ENCODE measurements at regions of chr7 and their contacts with region 1.

Region 1: DNA sequence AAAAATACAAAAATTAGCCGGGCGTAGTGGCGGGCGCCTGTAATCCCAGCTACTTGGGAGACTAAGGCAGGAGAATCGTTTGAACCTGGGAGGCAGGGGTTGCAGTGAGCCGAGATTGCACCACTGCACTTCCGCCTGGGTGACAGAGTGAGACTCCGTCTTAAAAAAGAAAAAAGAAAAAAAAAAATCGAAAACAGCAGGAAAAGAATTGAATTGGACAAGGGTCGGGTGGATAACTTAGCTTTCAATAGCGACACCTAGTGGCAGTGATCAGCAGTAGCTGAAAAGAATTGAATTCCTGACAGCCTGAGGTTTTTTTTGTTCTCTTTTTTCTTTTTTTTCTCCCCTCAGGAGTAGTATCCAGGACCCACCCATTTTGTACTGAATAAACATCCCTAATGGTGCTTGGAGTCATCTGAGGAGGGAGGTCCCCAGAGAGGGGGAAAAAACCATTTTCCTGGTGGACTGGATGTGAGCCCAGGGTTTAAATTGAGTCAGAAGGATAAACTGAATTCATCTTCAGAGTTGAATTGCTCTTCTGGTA is 55.1 kb downstream of the CYCS start:
- DNase-seq: no peak
- H3K4me3 ChIP-seq: peak overlapping the region; percentile 30 to 41 (median 33)
- H3K27ac ChIP-seq: no peak overlapping the region
- H3K4me1 ChIP-seq: peaks cover 0 to 10% (median 7%) of the 10 kb centered on the region in 4 donors
- H3K27me3 ChIP-seq: no peaks in the 10 kb centered on the region
- CTCF ChIP-seq: peak; percentile 74 to 90 (median 87)
- EP300 ChIP-seq: no peak
- POLR2A ChIP-seq: no peak

Region 2: DNA sequence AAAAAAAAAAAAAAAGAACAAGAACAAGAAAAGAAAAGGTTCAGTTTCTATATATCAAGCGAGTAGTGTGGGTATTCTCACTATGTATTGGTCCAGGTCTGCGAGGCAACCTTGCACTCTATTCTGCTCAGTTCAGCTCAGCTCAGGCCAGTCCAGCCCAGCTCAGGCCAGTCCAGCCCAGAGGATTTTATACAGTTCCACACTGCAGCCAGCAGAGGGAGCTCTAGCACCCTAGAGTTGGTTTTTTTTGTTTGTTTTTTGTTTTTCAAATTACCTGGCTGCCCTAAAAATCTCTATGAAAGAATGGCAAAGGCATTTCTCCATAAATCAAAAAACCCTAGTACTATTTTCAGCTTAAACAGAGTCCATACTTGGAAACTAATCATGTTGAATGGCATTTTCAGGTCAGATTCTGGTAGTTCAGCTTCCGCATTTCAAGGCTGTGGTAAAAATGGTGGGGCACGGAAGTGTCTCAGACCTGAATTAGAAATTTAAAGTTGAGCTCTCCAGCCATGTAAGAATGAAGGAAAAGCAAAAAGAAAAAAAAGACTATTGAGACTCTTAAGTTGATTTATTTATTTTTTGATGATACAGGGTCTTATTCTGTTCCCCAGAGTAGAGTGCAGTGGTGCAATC is 257.5 kb before region 1 on chr7:
- intact Hi-C with region 1: loop called (anchors 2 kb)
- DNase-seq: no peak
- H3K4me3 ChIP-seq: no peak overlapping the region
- H3K27ac ChIP-seq: no peak overlapping the region
- H3K4me1 ChIP-seq: no peaks in the 10 kb centered on the region
- H3K27me3 ChIP-seq: no peaks in the 10 kb centered on the region
- CTCF ChIP-seq: peak; percentile 84 to 94 (median 90)
- EP300 ChIP-seq: no peak
- POLR2A ChIP-seq: no peak

Region 3: GRCh38 chr7:24819916-24820689 is 249.9 kb before region 1 on chr7:
- intact Hi-C with region 1: loop called (anchors 2 kb)
- DNase-seq: peak; percentile 95
- H3K4me3 ChIP-seq: no peak overlapping the region
- H3K27ac ChIP-seq: peak overlapping the region in 3 of 4 donors; percentile 45 to 62 (median 59)
- H3K4me1 ChIP-seq: peaks cover 8 to 24% (median 23%) of the 10 kb centered on the region in 4 donors
- H3K27me3 ChIP-seq: no peaks in the 10 kb centered on the region
- CTCF ChIP-seq: peak; percentile 81 to 90 (median 84)
- EP300 ChIP-seq: no peak
- POLR2A ChIP-seq: no peak

Region 4: GRCh38 chr7:24869572-24869971 is 200.4 kb before region 1 on chr7:
- intact Hi-C with region 1: no loop called
- DNase-seq: no peak
- H3K4me3 ChIP-seq: no peak overlapping the region
- H3K27ac ChIP-seq: no peak overlapping the region
- H3K4me1 ChIP-seq: no peaks in the 10 kb centered on the region
- H3K27me3 ChIP-seq: no peaks in the 10 kb centered on the region
- CTCF ChIP-seq: no peak
- EP300 ChIP-seq: no peak
- POLR2A ChIP-seq: no peak

Region 5: DNA sequence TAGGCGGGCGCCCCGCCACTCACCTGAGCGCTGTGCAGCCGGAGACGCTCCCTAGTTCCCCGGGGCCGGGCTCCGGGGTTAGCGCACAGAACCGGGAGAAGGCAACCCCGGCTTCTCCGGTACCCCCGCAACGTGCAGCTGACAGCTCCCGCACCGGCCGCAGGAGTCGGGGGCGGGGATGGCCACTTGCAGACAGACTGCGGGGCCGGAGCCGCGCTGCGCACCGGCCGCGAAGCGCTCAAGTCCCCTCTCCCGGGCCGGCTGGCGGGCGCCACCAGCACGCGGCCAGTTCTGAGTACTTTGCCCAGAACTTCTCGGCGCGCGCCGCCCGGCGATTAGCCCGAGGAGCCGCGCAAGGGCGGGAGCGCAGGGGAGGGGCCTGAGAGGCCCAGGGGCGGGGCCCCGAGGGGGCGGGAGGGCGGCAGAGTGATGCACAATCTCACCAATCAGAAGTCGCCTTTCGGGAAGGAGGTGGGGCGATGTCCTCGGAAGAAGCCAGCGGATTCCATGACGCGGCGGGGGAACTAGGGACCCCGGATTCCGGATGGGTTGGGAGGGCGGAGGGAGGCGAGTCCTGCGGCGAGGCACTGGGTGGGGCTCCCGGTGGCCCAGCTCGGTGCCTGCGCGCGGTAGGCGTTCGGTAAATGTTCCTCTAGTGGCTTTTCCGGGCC is 90.0 kb before region 1 on chr7 and contains the start of gene OSBPL3:
- intact Hi-C with region 1: loop called (anchors 5 kb)
- DNase-seq: peak; percentile 98
- H3K4me3 ChIP-seq: peak within 1 kb of the TSS; percentile 75 to 85 (median 78)
- H3K27ac ChIP-seq: peak within 1 kb of the TSS; percentile 89 to 93 (median 92)
- H3K4me1 ChIP-seq: peaks cover 13 to 29% (median 20%) of the 10 kb centered on the region in 4 donors
- H3K27me3 ChIP-seq: no peaks in the 10 kb centered on the region
- CTCF ChIP-seq: peak in 1 of 3 experiments; percentile 13
- EP300 ChIP-seq: no peak
- POLR2A ChIP-seq: peak; percentile 26
- total RNA-seq, gene OSBPL3: 2.6 to 4.6 (median 3.3) TPM

Region 6: GRCh38 chr7:24991353-24991752 is 78.6 kb before region 1 on chr7:
- intact Hi-C with region 1: no loop called
- DNase-seq: no peak
- H3K4me3 ChIP-seq: no peak overlapping the region
- H3K27ac ChIP-seq: no peak overlapping the region
- H3K4me1 ChIP-seq: no peaks in the 10 kb centered on the region
- H3K27me3 ChIP-seq: no peaks in the 10 kb centered on the region
- CTCF ChIP-seq: no peak
- EP300 ChIP-seq: no peak
- POLR2A ChIP-seq: no peak

Region 7: DNA sequence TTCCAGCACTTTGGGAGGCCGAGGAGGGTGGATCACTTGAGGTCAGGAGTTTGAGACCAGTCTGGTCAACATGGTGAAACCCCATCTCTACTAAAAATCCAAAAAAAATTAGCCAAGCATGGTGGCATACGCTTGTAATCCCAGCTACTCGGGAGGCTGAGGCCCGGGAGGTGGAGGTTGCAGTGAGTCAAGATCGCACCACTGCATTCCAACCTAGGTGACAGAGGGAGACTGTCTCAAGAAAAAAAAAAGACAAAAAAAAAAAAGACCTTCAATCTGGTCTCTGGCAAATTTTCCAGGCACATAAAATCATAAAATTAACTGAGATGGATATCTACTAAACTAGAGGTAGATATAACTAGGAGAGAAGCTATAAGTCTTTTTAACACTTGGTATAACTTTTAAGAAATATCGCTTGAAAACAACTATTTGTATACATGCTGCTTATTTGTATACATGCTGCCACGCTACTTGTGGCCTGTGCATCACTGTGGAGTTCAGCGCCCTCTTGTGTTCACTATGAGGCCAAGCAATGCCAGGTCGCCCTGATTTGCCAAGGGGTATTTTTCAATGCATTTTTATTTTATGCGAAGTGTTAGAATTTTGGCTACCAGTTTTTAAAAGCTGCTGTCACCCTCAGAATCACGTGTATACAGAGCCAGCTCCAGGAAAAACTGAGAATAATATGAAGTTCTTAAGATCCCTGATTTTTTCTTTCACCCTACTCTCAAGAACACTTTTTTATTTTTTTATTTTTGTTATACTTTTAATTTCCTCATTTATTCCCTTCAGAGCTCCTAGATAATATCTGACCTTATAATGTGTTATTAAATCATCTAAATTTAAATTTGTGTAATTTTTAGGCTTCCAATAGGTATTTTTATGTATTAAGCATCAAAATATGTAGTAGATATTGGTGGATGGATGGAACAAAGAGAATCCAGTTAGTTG is 28.4 kb after region 1 on chr7:
- intact Hi-C with region 1: no loop called
- DNase-seq: no peak
- H3K4me3 ChIP-seq: no peak overlapping the region
- H3K27ac ChIP-seq: no peak overlapping the region
- H3K4me1 ChIP-seq: peaks cover 0 to 6% (median 2%) of the 10 kb centered on the region in 4 donors
- H3K27me3 ChIP-seq: no peaks in the 10 kb centered on the region
- CTCF ChIP-seq: peak; percentile 68 to 83 (median 68)
- EP300 ChIP-seq: no peak
- POLR2A ChIP-seq: no peak